ENCODE measurements at regions of chr5 and their contacts with region 1.

Region 1: GRCh38 chr5:115377468-115378217 is 81.2 kb upstream of the CCDC112 start:
- DNase-seq: no peak
- H3K4me3 ChIP-seq: no peak overlapping the region
- H3K27ac ChIP-seq: peak overlapping the region; percentile 84
- H3K4me1 ChIP-seq: peaks cover 34% of the 10 kb centered on the region
- H3K27me3 ChIP-seq: no peaks in the 10 kb centered on the region
- CTCF ChIP-seq: peak; percentile 67

Region 2: DNA sequence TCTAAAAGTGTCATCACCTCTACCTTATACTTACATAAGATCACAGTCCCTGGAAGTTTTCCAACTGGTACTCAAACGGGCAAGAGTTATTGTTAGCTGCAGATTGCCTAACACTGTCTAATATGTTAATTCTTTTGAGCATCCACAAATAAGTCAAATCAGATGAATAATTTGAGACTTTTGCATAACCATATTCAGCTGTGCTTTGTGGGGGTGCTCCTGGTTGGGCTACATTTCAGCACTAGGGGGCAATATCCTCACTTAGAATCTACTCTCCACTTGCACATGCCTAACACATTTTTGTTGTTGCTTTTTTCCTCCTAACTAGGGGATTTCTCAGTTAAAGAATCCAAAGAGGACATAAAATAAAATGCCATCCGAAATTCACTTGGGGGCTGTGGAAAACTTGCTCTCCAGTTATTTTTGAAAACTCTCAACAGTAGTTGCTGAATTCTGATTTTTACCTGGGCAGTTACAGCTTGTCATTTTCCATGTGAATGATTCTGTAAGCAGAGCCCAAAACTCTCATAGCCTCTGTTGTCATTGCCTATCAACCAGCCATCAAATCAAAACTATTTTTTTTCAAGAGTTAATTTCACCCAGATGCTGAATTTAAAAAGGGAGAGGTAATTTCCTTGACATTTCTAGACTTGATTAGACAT is 279.5 kb before region 1 on chr5:
- intact Hi-C with region 1: no loop called
- DNase-seq: no peak
- H3K4me3 ChIP-seq: no peak overlapping the region
- H3K27ac ChIP-seq: no peak overlapping the region
- H3K4me1 ChIP-seq: no peaks in the 10 kb centered on the region
- H3K27me3 ChIP-seq: peaks cover 22% of the 10 kb centered on the region
- CTCF ChIP-seq: peak; percentile 65

Region 3: DNA sequence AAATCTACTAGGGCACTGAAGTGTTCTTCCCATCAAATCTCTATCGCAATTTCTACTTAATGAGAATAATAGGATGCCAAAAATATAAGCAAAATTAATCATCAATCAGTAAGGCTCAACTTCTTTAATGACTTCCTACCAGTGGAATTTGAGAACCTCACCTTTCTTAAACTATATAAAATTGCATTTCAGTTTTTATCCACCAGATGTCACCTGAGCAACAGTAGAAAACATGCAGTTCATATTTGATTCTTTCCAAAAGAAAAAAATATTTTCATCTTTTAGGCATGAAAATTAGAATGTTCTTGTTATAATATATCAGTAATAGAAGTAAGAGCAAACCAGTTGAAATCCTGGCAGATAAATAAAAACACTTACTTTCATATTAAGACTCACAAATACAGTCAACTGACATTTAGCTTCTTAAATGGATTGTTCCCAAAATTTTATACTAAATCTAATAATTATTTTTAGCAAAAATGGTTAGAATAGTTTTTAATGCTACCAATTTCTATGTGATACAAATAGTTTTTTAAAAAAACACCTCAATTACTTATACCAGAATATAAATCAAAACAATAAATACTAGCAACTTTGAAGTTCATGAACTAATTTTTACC is 67.8 kb before region 1 on chr5:
- intact Hi-C with region 1: loop called (anchors 10 kb)
- DNase-seq: no peak
- H3K4me3 ChIP-seq: no peak overlapping the region
- H3K27ac ChIP-seq: no peak overlapping the region
- H3K4me1 ChIP-seq: no peaks in the 10 kb centered on the region
- H3K27me3 ChIP-seq: no peaks in the 10 kb centered on the region
- CTCF ChIP-seq: peak; percentile 81

Region 4: DNA sequence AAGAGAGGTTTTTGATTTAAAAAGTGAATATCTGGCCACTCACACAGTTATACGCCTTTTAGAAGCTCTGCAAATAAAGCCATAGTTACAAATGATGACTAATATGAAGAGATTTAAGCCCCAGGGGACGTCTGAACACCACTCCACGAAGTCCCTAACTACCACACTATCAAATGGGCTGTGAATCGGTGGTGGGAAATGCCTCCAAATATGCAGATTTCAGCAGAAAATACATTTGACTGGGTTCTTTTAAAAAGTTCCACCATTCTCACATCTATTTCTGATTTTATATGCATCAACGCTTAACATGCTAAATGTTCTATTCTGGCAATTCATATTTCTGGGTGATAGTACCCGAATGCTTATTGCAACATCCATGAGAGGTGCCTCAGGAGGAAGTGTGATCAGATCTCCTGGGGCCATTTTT is 202.1 kb after region 1 on chr5:
- intact Hi-C with region 1: loop called (anchors 10 kb)
- DNase-seq: no peak
- H3K4me3 ChIP-seq: no peak overlapping the region
- H3K27ac ChIP-seq: no peak overlapping the region
- H3K4me1 ChIP-seq: peaks cover 8% of the 10 kb centered on the region
- H3K27me3 ChIP-seq: no peaks in the 10 kb centered on the region
- CTCF ChIP-seq: no peak